Activated CD8-positive, alpha-beta memory T cell treated with anti-CD3 and anti-CD28 coated beads, Interleukin-2, amount 10 ng/mL, durations not matched to agents 7 days and 5 days (primary cell): ENCODE measurements at regions of chr19 and their contacts with region 1.

Region 1: GRCh38 chr19:16111160-16111908 is at the start of gene RAB8A:
- DNase-seq: peak; percentile 99
- ATAC-seq: peak; percentile 94
- H3K4me3 Mint-ChIP-seq: peak within 1 kb of the TSS; percentile 92
- H3K27ac Mint-ChIP-seq: peak within 1 kb of the TSS; percentile 97
- H3K4me1 Mint-ChIP-seq: peaks cover 40% of the 10 kb centered on the region
- H3K27me3 Mint-ChIP-seq: no peaks in the 10 kb centered on the region
- total RNA-seq, gene RAB8A: 204 to 271 TPM

Region 2: DNA sequence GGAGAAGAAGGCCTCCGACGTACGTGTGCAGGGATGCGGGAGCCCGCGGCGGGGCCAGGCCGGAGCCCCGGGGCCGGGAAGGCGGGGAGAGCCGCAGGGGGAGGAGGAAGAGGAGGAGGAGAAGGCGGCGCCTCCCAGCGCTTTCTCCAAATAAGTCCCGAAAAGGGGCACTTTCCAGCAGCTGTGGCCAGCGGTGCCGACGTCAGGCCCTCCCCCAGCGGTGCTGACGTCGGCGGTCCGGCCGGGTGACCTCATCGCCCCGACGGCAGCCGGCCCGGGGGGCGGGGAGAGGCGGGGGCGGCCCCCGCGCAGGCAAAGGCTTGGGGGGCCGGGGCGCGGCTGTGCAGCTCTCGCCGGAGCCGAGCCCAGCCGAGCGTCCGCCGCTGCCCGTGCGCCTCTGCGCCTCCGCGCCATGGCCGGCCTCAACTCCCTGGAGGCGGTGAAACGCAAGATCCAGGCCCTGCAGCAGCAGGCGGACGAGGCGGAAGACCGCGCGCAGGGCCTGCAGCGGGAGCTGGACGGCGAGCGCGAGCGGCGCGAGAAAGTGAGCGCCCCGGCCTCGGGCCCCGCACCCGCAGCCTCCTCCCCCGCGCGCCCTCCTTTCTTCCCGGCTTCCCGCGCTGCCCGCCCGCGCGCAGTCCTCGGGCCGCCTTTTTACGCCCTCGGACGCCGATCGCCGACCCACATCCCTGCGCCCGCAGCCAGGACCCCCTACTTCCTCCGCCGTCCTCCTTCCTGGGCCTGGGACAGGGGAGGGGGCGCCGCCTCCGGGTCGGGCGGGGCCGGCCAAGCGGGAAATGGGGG is 35.0 kb before region 1 on chr19 and contains the start of gene TPM4:
- CTCF ChIA-PET with region 1: interaction called, 23 read pairs
- DNase-seq: peak; percentile 96
- ATAC-seq: peak; percentile 65
- H3K4me3 Mint-ChIP-seq: peak within 1 kb of the TSS; percentile 80
- H3K27ac Mint-ChIP-seq: peak within 1 kb of the TSS; percentile 98
- H3K4me1 Mint-ChIP-seq: peaks cover 69% of the 10 kb centered on the region
- H3K27me3 Mint-ChIP-seq: no peaks in the 10 kb centered on the region
- total RNA-seq, gene TPM4: 491 to 493 TPM

Region 3: DNA sequence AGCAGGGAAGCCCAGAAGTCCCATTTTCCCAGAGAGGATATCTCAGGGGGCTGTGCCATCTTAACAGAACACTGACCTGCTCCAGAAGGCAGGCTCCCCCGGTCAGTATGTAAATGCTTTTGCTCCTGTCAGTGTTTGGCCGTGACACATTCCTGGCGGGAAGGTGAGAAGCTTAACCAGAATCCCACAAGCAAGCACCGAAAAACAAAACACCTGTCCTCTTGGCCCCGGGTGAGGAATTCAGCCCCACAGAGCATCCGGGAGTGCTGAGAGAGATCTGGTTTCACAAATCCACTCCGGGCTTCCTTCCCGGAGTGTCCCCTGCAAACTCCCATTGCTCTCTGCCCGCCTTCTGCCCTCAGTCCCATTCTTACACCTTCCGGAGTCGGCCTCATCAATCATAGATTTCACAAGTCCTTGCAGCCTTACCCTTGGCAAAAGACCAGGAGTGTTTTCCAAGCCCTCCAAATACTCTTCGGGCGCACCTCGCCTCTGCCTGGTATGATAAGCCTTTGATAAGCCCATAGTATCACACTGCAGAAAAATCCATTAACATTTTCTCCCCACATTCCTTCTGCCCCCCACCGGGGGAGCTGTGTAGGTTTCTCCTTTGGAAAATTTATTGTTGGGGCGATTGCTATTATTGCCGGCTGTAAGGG is 22.9 kb before region 1 on chr19:
- CTCF ChIA-PET with region 1: interaction called, 10 read pairs
- DNase-seq: no peak
- ATAC-seq: no peak
- H3K4me3 Mint-ChIP-seq: no peak overlapping the region
- H3K27ac Mint-ChIP-seq: peak overlapping the region; percentile 56
- H3K4me1 Mint-ChIP-seq: peaks cover 64% of the 10 kb centered on the region
- H3K27me3 Mint-ChIP-seq: no peaks in the 10 kb centered on the region

Region 4: GRCh38 chr19:16143399-16144245 is 32.3 kb after region 1 on chr19 and contains the start of gene HSH2D:
- CTCF ChIA-PET with region 1: interaction called, 34 read pairs
- DNase-seq: peak; percentile 96
- ATAC-seq: peak; percentile 93
- H3K4me3 Mint-ChIP-seq: peak within 1 kb of the TSS; percentile 98
- H3K27ac Mint-ChIP-seq: peak within 1 kb of the TSS; percentile 100
- H3K4me1 Mint-ChIP-seq: peaks cover 71% of the 10 kb centered on the region
- H3K27me3 Mint-ChIP-seq: no peaks in the 10 kb centered on the region
- total RNA-seq, gene HSH2D: 181 to 199 TPM